SK-N-SH (cell line): ENCODE measurements at regions of chr6 and their contacts with region 1.

Region 1: DNA sequence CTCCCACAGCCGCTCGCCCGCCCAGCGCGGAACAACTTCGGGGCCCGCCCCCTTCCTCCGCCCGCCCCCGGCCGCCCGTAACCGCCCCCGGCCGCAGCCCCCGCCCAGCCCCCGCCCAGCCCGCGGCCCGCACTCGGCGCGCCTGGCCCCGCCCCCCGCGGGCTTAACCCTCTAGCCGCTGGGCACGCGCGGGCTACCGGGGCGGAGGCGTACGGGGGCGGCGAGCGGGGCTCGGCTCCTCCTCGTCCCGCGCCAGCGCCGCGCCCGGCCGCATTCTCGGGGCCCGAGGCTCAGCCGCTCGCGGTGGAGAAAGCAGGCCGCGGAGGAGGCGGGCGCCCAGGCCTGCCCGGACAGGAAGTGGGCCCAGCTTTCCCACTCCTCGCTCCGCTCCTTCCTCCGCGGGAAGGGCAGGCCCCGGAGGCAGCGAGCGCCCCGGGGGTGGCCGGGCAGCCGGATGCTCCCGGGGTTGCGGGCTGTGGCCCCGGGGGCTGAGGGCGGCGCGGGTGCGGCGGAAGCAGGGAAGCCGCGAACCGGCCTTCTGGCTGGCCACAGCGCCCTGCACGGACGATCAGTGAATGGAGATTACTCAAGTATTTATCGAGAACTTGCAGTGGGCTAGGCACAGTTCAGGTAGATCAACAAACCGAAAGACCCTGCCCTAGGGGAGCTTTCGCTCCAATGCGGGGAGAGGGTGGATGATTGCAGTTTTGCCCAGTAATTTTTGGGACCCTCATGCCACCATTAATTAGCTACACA is at the start of gene TRAM2:
- DNase-seq: peak; percentile 98
- H3K4me3 ChIP-seq: peak within 1 kb of the TSS; percentile 88 to 94
- H3K27ac ChIP-seq: peak within 1 kb of the TSS; percentile 96 to 98
- H3K4me1 ChIP-seq: peaks cover 29 to 38% of the 10 kb centered on the region in 2 experiments
- H3K27me3 ChIP-seq: no peaks in the 10 kb centered on the region
- CTCF ChIP-seq: peak; percentile 30; the same call in 1 of the 2 replicates
- EP300 ChIP-seq: no peak
- RAD21 ChIP-seq: no peak
- polyA plus RNA-seq, gene TRAM2: 26.4 and 36.0 TPM in 2 replicates

Region 2: DNA sequence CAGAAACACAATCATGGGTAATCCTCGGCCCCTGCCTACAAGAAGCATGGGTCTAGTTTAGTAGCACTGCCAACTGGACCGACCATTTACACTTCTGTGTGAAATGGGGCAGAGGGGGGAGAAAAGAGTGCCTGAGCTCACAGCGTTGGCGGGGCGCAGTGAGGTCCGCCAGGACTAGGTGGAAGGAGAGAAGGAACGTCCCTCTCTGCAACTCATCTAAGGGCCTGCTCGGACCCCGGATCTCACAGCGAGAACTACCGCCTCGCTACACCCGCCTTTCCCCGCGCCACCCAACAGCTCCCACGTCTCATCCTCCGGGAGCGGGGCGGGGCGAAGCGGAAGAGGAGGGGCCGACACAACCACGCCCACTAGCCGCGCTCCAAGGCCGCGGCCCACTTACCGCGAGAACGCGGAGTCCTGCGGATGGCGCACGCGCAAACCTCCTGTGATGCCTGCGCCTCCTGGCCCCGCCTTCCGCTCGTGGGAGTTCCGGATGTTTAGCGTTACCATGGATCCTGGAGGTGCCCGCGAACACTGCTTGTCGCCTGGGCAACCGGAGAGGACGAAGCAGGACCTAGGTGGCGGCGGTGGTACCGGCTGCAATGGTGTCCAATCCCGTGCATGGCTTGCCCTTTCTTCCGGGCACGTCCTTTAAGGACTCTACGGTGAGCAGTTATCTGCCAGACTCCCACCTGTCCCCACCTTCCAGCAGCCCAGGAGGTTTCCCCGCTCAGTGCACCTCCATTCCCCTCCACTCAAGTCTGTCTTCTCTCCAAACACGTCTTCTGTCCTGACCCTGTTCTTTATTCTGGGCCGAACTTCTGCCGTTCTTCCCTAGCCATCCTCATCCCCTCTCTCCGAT is 157.2 kb before region 1 on chr6 and contains the start of gene EFHC1:
- CTCF ChIA-PET with region 1: interaction called, 22 read pairs
- POLR2A ChIA-PET with region 1: interaction called, 6 read pairs
- DNase-seq: peak; percentile 94
- H3K4me3 ChIP-seq: peak within 1 kb of the TSS; percentile 78 to 88
- H3K27ac ChIP-seq: peak within 1 kb of the TSS; percentile 93 to 97
- H3K4me1 ChIP-seq: peaks cover 23 to 54% of the 10 kb centered on the region in 2 experiments
- H3K27me3 ChIP-seq: no peaks in the 10 kb centered on the region
- CTCF ChIP-seq: no peak
- EP300 ChIP-seq: no peak
- RAD21 ChIP-seq: no peak
- polyA plus RNA-seq, gene EFHC1: 39.4 and 54.3 TPM in 2 replicates

Region 3: GRCh38 chr6:52551401-52552277 is 25.6 kb before region 1 on chr6:
- CTCF ChIA-PET with region 1: interaction called, 10 read pairs
- POLR2A ChIA-PET with region 1: interaction called, 3 read pairs
- DNase-seq: peak; percentile 75
- H3K4me3 ChIP-seq: peak overlapping the region in 1 of 2 experiments; percentile 2; a peak in 1 of 4 replicates
- H3K27ac ChIP-seq: peak overlapping the region; percentile 82 to 91
- H3K4me1 ChIP-seq: peaks cover 62 to 76% of the 10 kb centered on the region in 2 experiments
- H3K27me3 ChIP-seq: no peaks in the 10 kb centered on the region
- CTCF ChIP-seq: peak; percentile 28; the same call in 1 of the 2 replicates
- EP300 ChIP-seq: peak; percentile 86 to 88; a peak in 3 of 4 replicates
- RAD21 ChIP-seq: peak; percentile 54

Region 4: DNA sequence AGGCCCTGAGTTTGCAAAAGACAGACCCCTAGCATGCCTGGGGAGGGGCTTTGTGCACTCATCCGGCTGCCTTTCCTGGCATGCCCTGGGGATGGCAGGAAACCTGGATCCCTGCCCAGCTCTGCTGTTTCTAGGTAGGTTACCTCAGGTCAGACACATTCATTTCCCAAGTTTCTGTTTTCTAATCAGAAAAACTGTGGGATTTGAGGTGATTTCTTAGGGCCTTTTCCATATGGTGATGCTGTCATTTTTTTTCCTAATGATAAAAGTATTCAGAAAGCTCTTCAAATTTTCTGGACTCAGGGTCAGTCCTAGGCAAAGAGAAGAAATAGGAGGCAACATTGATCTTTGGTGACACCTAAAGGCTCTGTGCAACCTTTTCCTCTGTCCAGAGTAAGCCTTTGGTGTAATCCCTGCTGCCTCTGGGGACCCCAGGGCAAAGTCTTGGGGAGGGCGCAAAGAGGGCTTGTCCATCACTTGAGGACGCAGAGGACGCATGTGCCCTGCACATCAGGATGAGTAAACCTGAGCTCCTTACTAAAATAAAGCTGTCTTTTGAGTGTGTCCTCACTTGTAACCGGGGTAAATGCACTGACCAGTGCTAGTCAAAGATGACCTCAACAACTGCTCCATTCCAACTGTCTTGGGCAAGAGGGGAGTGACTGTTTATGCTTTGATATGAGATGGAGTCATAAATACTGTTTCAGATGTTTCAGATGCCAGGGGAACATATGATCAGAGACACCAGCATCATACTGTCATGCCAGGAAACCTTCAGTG is 13.1 kb after region 1 on chr6:
- CTCF ChIA-PET with region 1: interaction called, 86 read pairs
- POLR2A ChIA-PET with region 1: interaction called, 8 read pairs
- DNase-seq: peak; percentile 69
- H3K4me3 ChIP-seq: no peak overlapping the region
- H3K27ac ChIP-seq: peak overlapping the region in 1 of 2 experiments; percentile 97; a peak in 2 of 4 replicates
- H3K4me1 ChIP-seq: peaks cover 26 to 66% of the 10 kb centered on the region in 2 experiments
- H3K27me3 ChIP-seq: no peaks in the 10 kb centered on the region
- CTCF ChIP-seq: peak; percentile 37
- EP300 ChIP-seq: peak in 1 of 2 experiments; percentile 80; a peak in 1 of 4 replicates
- RAD21 ChIP-seq: peak; percentile 48

Region 5: GRCh38 chr6:52617087-52617486 is 39.9 kb after region 1 on chr6:
- CTCF ChIA-PET with region 1: no interaction called
- POLR2A ChIA-PET with region 1: no interaction called
- DNase-seq: no peak
- H3K4me3 ChIP-seq: no peak overlapping the region
- H3K27ac ChIP-seq: 0 out of 4 replicates have a peak overlapping the region, but pooled peaks of 1 of the 2 experiments have one; percentile 38
- H3K4me1 ChIP-seq: peaks cover 11 to 18% of the 10 kb centered on the region in 2 experiments; a peak in 3 of 4 replicates
- H3K27me3 ChIP-seq: no peaks in the 10 kb centered on the region
- CTCF ChIP-seq: no peak
- EP300 ChIP-seq: no peak
- RAD21 ChIP-seq: no peak

Region 6: DNA sequence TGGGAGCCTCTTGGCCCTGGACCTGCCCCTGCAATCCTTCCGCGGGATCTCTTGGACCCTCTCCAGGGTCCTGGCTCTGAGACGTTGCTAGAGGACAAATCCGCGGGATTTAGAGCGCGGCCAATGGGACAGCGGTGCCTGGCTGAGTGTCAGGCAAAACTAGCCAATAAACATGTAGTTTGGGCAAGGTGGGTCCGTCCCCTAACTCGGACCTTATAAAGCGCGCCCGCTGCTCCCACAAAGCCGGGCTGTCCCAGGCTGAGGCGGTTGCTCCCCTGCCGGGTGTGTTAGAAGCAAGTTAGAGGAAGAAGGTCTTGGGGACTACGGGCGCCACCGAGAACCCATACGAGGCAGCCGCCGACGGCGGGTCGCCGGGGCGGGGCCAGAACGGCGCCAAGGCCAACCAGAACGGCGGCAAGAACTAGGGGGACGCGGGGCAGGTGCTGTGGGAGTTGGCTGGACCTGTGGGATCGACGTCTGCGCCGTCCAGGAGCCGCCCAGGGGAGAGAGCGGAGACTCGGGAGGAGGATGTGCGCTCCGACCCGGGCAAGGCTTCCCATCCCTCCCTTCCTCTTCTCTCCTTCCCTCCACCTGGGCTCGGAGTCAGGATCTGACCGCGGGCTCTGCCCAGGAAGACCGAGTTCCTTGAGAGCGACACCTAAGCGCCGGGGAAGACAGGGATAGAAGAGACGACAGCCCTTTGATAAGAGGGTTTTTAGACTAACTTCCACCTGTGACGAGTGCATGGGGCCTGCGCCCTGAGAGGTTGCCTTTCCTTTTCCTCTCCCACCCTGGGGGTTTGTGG is 87.2 kb after region 1 on chr6:
- CTCF ChIA-PET with region 1: interaction called, 15 read pairs
- POLR2A ChIA-PET with region 1: no interaction called
- DNase-seq: peak; percentile 97
- H3K4me3 ChIP-seq: peak overlapping the region; percentile 65 to 75
- H3K27ac ChIP-seq: peak overlapping the region; percentile 39 to 87; a peak in 2 of 4 replicates
- H3K4me1 ChIP-seq: peaks cover 7 to 32% of the 10 kb centered on the region in 2 experiments; a peak in 3 of 4 replicates
- H3K27me3 ChIP-seq: no peaks in the 10 kb centered on the region
- CTCF ChIP-seq: no peak
- EP300 ChIP-seq: no peak
- RAD21 ChIP-seq: no peak